Naive thymus-derived CD4-positive, alpha-beta T cell (primary cell): ENCODE measurements at regions of chr10 and their contacts with region 1.

Region 1: DNA sequence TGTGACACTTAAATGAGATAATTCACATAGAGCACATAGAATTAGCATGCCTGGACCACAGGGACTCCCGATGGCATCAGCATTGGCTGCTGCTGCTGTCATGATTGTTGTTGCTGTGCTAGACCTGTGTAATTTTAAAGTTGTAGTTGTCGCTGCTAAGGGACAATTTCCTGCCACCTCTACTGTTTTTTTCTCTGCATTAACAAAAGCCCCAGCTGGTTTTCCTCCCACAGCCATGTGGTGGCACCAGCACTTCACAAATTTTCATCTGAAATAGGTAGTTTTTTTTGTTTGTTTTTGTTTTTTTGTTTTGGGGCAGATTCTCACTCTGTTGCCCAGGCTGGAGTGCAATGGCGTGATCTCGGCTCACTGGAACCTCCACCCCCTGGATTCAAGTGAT is 25.4 kb upstream of the PRXL2A start:
- DNase-seq: peak in 8 of 9 donors; percentile 34 to 79 (median 63)
- ATAC-seq: peak; percentile 65
- H3K4me3 ChIP-seq: no peak overlapping the region
- H3K4me3 Mint-ChIP-seq: peak overlapping the region in 5 of 10 donors; percentile 10 to 53 (median 45)
- H3K27ac ChIP-seq: no peak overlapping the region
- H3K27ac Mint-ChIP-seq: peak overlapping the region in 8 of 9 donors; percentile 14 to 85 (median 74)
- H3K4me1 ChIP-seq: peaks cover 0 to 16% of the 10 kb centered on the region in 2 donors
- H3K4me1 Mint-ChIP-seq: peaks cover 10 to 24% (median 19%) of the 10 kb centered on the region in 7 donors
- H3K27me3 ChIP-seq: no peaks in the 10 kb centered on the region
- H3K27me3 Mint-ChIP-seq: peaks cover 0 to 8% (median 0%) of the 10 kb centered on the region in 5 donors

Region 2: GRCh38 chr10:80371460-80371859 is 11.5 kb before region 1 on chr10:
- CTCF ChIA-PET with region 1: no interaction called
- POLR2A ChIA-PET with region 1: no interaction called
- intact Hi-C with region 1: no loop called
- DNase-seq: no peak
- ATAC-seq: no peak
- H3K4me3 ChIP-seq: no peak overlapping the region
- H3K4me3 Mint-ChIP-seq: no peak overlapping the region
- H3K27ac ChIP-seq: no peak overlapping the region
- H3K27ac Mint-ChIP-seq: no peak overlapping the region
- H3K4me1 ChIP-seq: no peaks in the 10 kb centered on the region
- H3K4me1 Mint-ChIP-seq: peaks cover 0 to 1% (median 0%) of the 10 kb centered on the region in 7 donors
- H3K27me3 ChIP-seq: no peaks in the 10 kb centered on the region
- H3K27me3 Mint-ChIP-seq: peaks cover 0 to 16% (median 5%) of the 10 kb centered on the region in 5 donors

Region 3: DNA sequence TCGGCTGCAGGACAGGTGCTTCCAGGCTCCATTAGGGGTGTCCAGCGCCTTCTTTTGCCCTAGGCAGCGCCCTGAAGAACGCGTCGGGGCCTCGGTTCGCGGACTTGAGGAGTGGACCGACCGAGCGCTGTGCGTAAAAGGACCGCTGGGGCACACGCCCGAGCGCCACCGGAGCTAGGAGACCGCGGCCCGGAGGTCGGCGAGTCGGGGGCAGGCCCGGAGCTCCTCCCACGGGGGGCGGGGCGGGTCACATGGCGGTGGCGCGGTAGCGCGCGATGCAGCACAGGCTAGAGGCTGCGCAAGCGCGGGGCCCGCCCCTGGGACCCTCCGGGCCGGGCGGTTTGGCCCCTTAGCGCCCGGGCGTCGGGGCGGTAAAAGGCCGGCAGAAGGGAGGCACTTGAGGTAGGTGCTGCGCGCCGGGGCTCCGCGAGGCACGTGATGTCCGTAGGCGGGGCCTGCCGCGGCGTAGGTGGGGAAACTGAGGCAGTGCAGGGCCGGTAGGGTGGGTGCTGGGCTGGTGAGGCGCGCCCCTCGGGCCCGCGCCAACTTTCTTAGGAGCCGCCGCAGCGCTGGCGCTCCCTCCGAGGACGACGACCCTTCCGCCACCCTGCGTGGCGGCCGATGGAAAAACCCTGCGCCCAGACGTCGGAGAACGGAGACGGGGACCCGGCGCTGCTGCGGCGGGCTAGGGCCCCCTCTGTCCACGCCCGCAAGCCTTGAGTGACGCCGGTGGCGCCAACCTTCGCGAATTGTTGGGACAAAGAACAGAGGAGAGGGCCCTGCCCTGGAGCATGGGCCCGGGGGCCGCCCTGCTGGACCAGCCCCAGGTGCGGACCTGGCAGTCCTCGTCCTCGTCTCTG is 25.5 kb after region 1 on chr10 and contains the start of gene PRXL2A:
- CTCF ChIA-PET with region 1: interaction called, 5 read pairs
- POLR2A ChIA-PET with region 1: interaction called, 3 read pairs
- intact Hi-C with region 1: loop called in 1 of 2 experiments (anchors 2 kb)
- DNase-seq: peak; percentile 66 to 87 (median 76)
- ATAC-seq: peak; percentile 97
- H3K4me3 ChIP-seq: peak within 1 kb of the TSS; percentile 73
- H3K4me3 Mint-ChIP-seq: peak within 1 kb of the TSS; percentile 82 to 98 (median 92)
- H3K27ac ChIP-seq: peak within 1 kb of the TSS; percentile 71
- H3K27ac Mint-ChIP-seq: peak within 1 kb of the TSS; percentile 43 to 88 (median 82)
- H3K4me1 ChIP-seq: peaks cover 0 to 10% of the 10 kb centered on the region in 2 donors
- H3K4me1 Mint-ChIP-seq: peaks cover 27 to 55% (median 36%) of the 10 kb centered on the region in 7 donors
- H3K27me3 ChIP-seq: no peaks in the 10 kb centered on the region
- H3K27me3 Mint-ChIP-seq: peaks cover 0 to 28% (median 0%) of the 10 kb centered on the region in 5 donors
- total RNA-seq, gene PRXL2A: 5.6 to 9.7 (median 8.5) TPM

Region 4: GRCh38 chr10:80530251-80530650 is 147.3 kb after region 1 on chr10:
- CTCF ChIA-PET with region 1: interaction called, 4 read pairs
- POLR2A ChIA-PET with region 1: interaction called, 3 read pairs
- intact Hi-C with region 1: loop called (anchors 2 to 5 kb)
- DNase-seq: peak in 6 of 9 donors; percentile 38 to 56 (median 46)
- ATAC-seq: peak; percentile 77
- H3K4me3 ChIP-seq: no peak overlapping the region
- H3K4me3 Mint-ChIP-seq: peak overlapping the region; percentile 56 to 85 (median 73)
- H3K27ac ChIP-seq: peak overlapping the region; percentile 60
- H3K27ac Mint-ChIP-seq: peak overlapping the region; percentile 88 to 97 (median 92)
- H3K4me1 ChIP-seq: peaks cover 39 to 74% of the 10 kb centered on the region in 2 donors
- H3K4me1 Mint-ChIP-seq: peaks cover 55 to 77% (median 73%) of the 10 kb centered on the region in 7 donors
- H3K27me3 ChIP-seq: no peaks in the 10 kb centered on the region
- H3K27me3 Mint-ChIP-seq: no peaks in the 10 kb centered on the region

Region 5: GRCh38 chr10:80553436-80553835 is 170.4 kb after region 1 on chr10:
- CTCF ChIA-PET with region 1: no interaction called
- POLR2A ChIA-PET with region 1: no interaction called
- intact Hi-C with region 1: no loop called
- DNase-seq: no peak
- ATAC-seq: no peak
- H3K4me3 ChIP-seq: no peak overlapping the region
- H3K4me3 Mint-ChIP-seq: no peak overlapping the region
- H3K27ac ChIP-seq: no peak overlapping the region
- H3K27ac Mint-ChIP-seq: peak overlapping the region in 1 of 9 donors; percentile 62
- H3K4me1 ChIP-seq: no peaks in the 10 kb centered on the region
- H3K4me1 Mint-ChIP-seq: no peaks in the 10 kb centered on the region
- H3K27me3 ChIP-seq: no peaks in the 10 kb centered on the region
- H3K27me3 Mint-ChIP-seq: peaks cover 4 to 29% (median 6%) of the 10 kb centered on the region in 5 donors

Region 6: GRCh38 chr10:80599424-80599847 is 216.4 kb after region 1 on chr10:
- CTCF ChIA-PET with region 1: no interaction called
- POLR2A ChIA-PET with region 1: no interaction called
- intact Hi-C with region 1: loop called (anchors 2 to 5 kb)
- DNase-seq: peak in 5 of 9 donors; percentile 7 to 30 (median 10)
- ATAC-seq: peak; percentile 71
- H3K4me3 ChIP-seq: no peak overlapping the region
- H3K4me3 Mint-ChIP-seq: no peak overlapping the region
- H3K27ac ChIP-seq: no peak overlapping the region
- H3K27ac Mint-ChIP-seq: no peak overlapping the region
- H3K4me1 ChIP-seq: no peaks in the 10 kb centered on the region
- H3K4me1 Mint-ChIP-seq: peaks cover 0 to 3% (median 0%) of the 10 kb centered on the region in 7 donors
- H3K27me3 ChIP-seq: no peaks in the 10 kb centered on the region
- H3K27me3 Mint-ChIP-seq: peaks cover 0 to 2% (median 0%) of the 10 kb centered on the region in 5 donors

Region 7: GRCh38 chr10:80699602-80700039 is 316.6 kb after region 1 on chr10:
- CTCF ChIA-PET with region 1: no interaction called
- POLR2A ChIA-PET with region 1: no interaction called
- intact Hi-C with region 1: loop called (anchors 2 to 10 kb)
- DNase-seq: peak; percentile 14 to 68 (median 54)
- ATAC-seq: peak; percentile 78
- H3K4me3 ChIP-seq: no peak overlapping the region
- H3K4me3 Mint-ChIP-seq: no peak overlapping the region
- H3K27ac ChIP-seq: no peak overlapping the region
- H3K27ac Mint-ChIP-seq: no peak overlapping the region
- H3K4me1 ChIP-seq: no peaks in the 10 kb centered on the region
- H3K4me1 Mint-ChIP-seq: no peaks in the 10 kb centered on the region
- H3K27me3 ChIP-seq: no peaks in the 10 kb centered on the region
- H3K27me3 Mint-ChIP-seq: peaks cover 0 to 14% (median 4%) of the 10 kb centered on the region in 5 donors

Region 8: GRCh38 chr10:81018708-81019365 is 635.8 kb after region 1 on chr10:
- CTCF ChIA-PET with region 1: interaction called, 7 read pairs
- POLR2A ChIA-PET with region 1: no interaction called
- intact Hi-C with region 1: loop called (anchors 1 to 2 kb)
- DNase-seq: peak in 4 of 9 donors; percentile 1 to 19 (median 8)
- ATAC-seq: peak; percentile 52
- H3K4me3 ChIP-seq: no peak overlapping the region
- H3K4me3 Mint-ChIP-seq: no peak overlapping the region
- H3K27ac ChIP-seq: no peak overlapping the region
- H3K27ac Mint-ChIP-seq: no peak overlapping the region
- H3K4me1 ChIP-seq: no peaks in the 10 kb centered on the region
- H3K4me1 Mint-ChIP-seq: peaks cover 0 to 4% (median 0%) of the 10 kb centered on the region in 7 donors
- H3K27me3 ChIP-seq: no peaks in the 10 kb centered on the region
- H3K27me3 Mint-ChIP-seq: peaks cover 5 to 23% (median 12%) of the 10 kb centered on the region in 5 donors

Region 9: GRCh38 chr10:81838953-81839352 is 1456.0 kb after region 1 on chr10:
- CTCF ChIA-PET with region 1: no interaction called
- POLR2A ChIA-PET with region 1: no interaction called
- intact Hi-C with region 1: loop called in 1 of 2 experiments (anchors 5 kb)
- DNase-seq: peak in 1 of 9 donors; percentile 2
- ATAC-seq: no peak
- H3K4me3 ChIP-seq: no peak overlapping the region
- H3K4me3 Mint-ChIP-seq: no peak overlapping the region
- H3K27ac ChIP-seq: no peak overlapping the region
- H3K27ac Mint-ChIP-seq: no peak overlapping the region
- H3K4me1 ChIP-seq: no peaks in the 10 kb centered on the region
- H3K4me1 Mint-ChIP-seq: no peaks in the 10 kb centered on the region
- H3K27me3 ChIP-seq: no peaks in the 10 kb centered on the region
- H3K27me3 Mint-ChIP-seq: peaks cover 0 to 27% (median 5%) of the 10 kb centered on the region in 5 donors